ENCODE measurements at regions of chr10 and their contacts with region 1.

Region 1: DNA sequence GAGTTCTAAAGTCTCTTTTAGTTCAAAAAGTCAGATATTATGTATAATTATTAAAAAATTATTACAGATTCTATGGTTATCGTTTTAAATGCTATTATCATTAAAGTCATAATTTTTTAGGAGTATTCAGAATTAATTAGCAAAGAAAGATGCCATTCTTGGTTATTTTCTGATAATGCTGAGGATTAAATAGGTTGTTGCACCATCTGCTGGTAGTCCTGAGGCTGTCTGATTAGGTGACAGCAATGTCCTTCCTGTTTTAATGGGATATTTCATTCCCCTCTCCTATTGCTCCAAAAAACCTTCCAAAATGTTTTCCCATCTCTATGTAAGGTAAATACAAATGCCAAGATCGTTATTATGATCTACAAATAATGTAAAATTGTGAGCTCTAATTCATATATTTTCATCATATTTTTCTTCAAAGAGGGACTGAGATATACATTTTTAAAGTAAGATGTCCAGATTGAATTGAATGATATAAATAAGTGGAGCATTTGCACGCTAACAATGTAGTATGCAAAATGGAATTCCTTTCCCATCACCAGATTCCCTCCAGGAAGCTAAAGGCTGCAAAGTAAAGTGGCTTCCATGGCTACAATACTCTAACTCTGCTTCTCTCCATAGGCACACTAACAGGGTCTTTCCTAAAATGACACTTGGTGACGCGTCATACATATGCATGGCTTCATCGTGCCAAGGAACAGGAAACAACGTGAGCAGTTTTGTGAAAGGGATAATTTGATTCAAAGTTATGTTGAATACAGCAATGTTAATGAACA is 58.8 kb upstream of the AKR1E2 start:
- DNase-seq: peak in 1 of 2 donors; percentile 30
- ATAC-seq: peak in 6 of 8 donors; percentile 40 to 72 (median 66)
- H3K4me3 ChIP-seq: no peak overlapping the region
- H3K27ac ChIP-seq: peak overlapping the region in 9 of 10 donors; percentile 4 to 75 (median 39)
- H3K4me1 ChIP-seq: peaks cover 5 to 64% (median 38%) of the 10 kb centered on the region in 9 donors
- H3K27me3 ChIP-seq: no peaks in the 10 kb centered on the region
- CTCF ChIP-seq: peak; percentile 51 to 92 (median 82)

Region 2: GRCh38 chr10:3239066-3239919 is 1527.9 kb before region 1 on chr10:
- intact Hi-C with region 1: loop called in 9 of 10 experiments (anchors 1 to 10 kb)
- DNase-seq: peak; percentile 77 to 82
- ATAC-seq: peak; percentile 81 to 93 (median 88)
- H3K4me3 ChIP-seq: peak overlapping the region in 6 of 10 donors; percentile 23 to 36 (median 32)
- H3K27ac ChIP-seq: peak overlapping the region in 9 of 10 donors; percentile 11 to 84 (median 68)
- H3K4me1 ChIP-seq: peaks cover 0 to 26% (median 5%) of the 10 kb centered on the region in 9 donors
- H3K27me3 ChIP-seq: peaks cover 0 to 4% (median 0%) of the 10 kb centered on the region in 7 donors
- CTCF ChIP-seq: peak; percentile 85 to 98 (median 95)

Region 3: GRCh38 chr10:3467052-3467951 is 1299.9 kb before region 1 on chr10:
- intact Hi-C with region 1: loop called in 1 of 10 experiments (anchors 10 kb)
- DNase-seq: peak; percentile 81 to 87
- ATAC-seq: peak; percentile 69 to 89 (median 82)
- H3K4me3 ChIP-seq: peak overlapping the region in 6 of 10 donors; percentile 7 to 35 (median 20)
- H3K27ac ChIP-seq: peak overlapping the region; percentile 46 to 94 (median 88)
- H3K4me1 ChIP-seq: peaks cover 0 to 71% (median 59%) of the 10 kb centered on the region in 9 donors
- H3K27me3 ChIP-seq: no peaks in the 10 kb centered on the region
- CTCF ChIP-seq: peak; percentile 24 to 71 (median 53)

Region 4: GRCh38 chr10:4267086-4267773 is 500.0 kb before region 1 on chr10:
- intact Hi-C with region 1: loop called in 1 of 10 experiments (anchors 5 kb)
- DNase-seq: no peak
- ATAC-seq: peak in 2 of 8 donors; percentile 13 to 17
- H3K4me3 ChIP-seq: no peak overlapping the region
- H3K27ac ChIP-seq: peak overlapping the region in 1 of 10 donors; percentile 32
- H3K4me1 ChIP-seq: peaks cover 0 to 52% (median 32%) of the 10 kb centered on the region in 9 donors
- H3K27me3 ChIP-seq: no peaks in the 10 kb centered on the region
- CTCF ChIP-seq: peak in 6 of 9 donors; percentile 15 to 51 (median 28)

Region 5: DNA sequence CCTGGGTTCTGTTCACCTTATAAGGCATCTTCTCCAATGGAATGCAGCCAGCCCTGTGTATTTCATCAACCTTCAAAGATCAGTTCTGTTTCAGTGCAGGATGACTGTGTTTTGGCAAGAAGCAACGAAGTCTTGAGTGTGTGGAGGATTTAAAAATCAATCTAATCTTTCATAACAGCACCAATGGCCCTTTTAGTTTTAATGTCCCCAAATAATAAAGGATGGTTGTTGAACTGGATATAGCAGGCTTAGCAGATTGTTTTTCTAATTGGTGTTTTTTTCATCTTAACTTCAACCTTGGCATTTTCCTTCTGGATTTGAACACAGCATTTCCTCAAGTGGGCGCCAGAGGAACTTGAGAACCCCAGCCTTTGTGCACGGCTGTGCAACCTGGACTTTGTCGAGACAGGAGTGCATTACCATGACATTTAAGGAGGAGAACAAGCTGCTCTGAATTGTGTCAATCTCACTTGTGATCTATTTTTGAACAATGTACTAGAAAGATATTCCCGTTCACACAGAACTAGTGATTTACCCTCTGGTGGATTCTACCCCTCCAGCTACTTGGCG is 254.5 kb before region 1 on chr10:
- intact Hi-C with region 1: loop called (anchors 2 to 10 kb)
- DNase-seq: peak; percentile 40 to 58
- ATAC-seq: peak; percentile 49 to 94 (median 76)
- H3K4me3 ChIP-seq: no peak overlapping the region
- H3K27ac ChIP-seq: peak overlapping the region in 9 of 10 donors; percentile 2 to 90 (median 77)
- H3K4me1 ChIP-seq: peaks cover 0 to 48% (median 34%) of the 10 kb centered on the region in 9 donors
- H3K27me3 ChIP-seq: no peaks in the 10 kb centered on the region
- CTCF ChIP-seq: peak; percentile 21 to 71 (median 56)

Region 6: GRCh38 chr10:4670737-4671136 is 96.5 kb before region 1 on chr10:
- intact Hi-C with region 1: loop called in 2 of 10 experiments (anchors 2 to 5 kb)
- DNase-seq: no peak
- ATAC-seq: no peak
- H3K4me3 ChIP-seq: no peak overlapping the region
- H3K27ac ChIP-seq: peak overlapping the region in 8 of 10 donors; percentile 1 to 72 (median 40)
- H3K4me1 ChIP-seq: peaks cover 0 to 16% (median 4%) of the 10 kb centered on the region in 9 donors
- H3K27me3 ChIP-seq: no peaks in the 10 kb centered on the region
- CTCF ChIP-seq: no peak